ENCODE measurements at regions of chr19 and their contacts with region 1.

Region 1: GRCh38 chr19:52139252-52140031 is at the start of gene ZNF616:
- DNase-seq: peak; percentile 99
- H3K4me3 Mint-ChIP-seq: peak within 1 kb of the TSS; percentile 98
- H3K27ac Mint-ChIP-seq: peak within 1 kb of the TSS; percentile 90
- H3K4me1 Mint-ChIP-seq: peaks cover 17% of the 10 kb centered on the region
- H3K27me3 Mint-ChIP-seq: no peaks in the 10 kb centered on the region
- total RNA-seq, gene ZNF616: 6.1 and 7.1 TPM in 2 replicates

Region 2: DNA sequence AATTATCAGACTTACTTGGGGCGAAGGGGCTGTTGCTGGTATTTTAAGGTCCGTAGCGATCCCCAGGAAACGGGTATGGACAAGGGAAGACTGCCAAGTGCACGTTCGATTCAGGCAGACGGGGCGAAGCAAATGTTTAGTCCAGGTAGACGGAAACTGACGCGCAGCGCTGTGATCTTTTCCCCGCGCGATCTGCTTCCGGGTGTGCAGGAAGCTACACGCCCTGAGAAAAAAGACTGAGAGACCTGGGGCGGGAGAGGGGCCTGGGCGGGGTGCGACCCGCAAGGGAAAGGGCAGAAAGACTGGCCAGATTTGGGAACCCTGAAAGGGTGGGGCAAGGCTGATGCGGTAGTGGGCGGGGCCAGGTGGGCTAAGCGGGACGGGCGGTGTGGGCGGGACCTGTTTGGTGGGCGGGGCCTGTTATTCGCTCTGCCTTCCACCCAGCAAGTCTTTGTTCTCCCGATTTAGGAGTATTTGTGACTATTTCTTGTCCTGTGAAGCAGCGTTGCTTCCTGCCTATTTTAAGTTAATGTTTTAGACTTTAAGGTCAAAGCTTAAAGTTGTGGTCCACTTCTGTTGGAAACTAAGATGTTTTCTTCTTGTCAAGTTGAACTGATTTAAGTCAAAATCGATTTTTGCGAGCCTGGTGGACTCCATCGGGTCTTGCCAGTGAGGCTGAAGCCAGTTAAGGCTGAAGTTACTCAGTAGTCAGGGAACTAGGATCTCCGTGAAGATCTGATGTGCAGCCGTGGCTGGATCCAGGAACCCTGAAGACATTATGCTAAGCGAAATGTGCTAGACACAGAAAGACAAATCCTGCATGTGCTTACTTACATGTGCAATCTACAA is 32.1 kb after region 1 on chr19 and contains the start of gene ZNF836:
- intact Hi-C with region 1: loop called (anchors 1 kb)
- DNase-seq: peak; percentile 96
- H3K4me3 Mint-ChIP-seq: peak within 1 kb of the TSS; percentile 93
- H3K27ac Mint-ChIP-seq: peak within 1 kb of the TSS; percentile 94
- H3K4me1 Mint-ChIP-seq: peaks cover 19% of the 10 kb centered on the region
- H3K27me3 Mint-ChIP-seq: no peaks in the 10 kb centered on the region
- total RNA-seq, gene ZNF836: 6.3 and 6.7 TPM in 2 replicates

Region 3: GRCh38 chr19:52200044-52200443 is 60.6 kb after region 1 on chr19:
- intact Hi-C with region 1: no loop called
- DNase-seq: no peak
- H3K4me3 Mint-ChIP-seq: no peak overlapping the region
- H3K27ac Mint-ChIP-seq: no peak overlapping the region
- H3K4me1 Mint-ChIP-seq: peaks cover 11% of the 10 kb centered on the region
- H3K27me3 Mint-ChIP-seq: no peaks in the 10 kb centered on the region

Region 4: GRCh38 chr19:52237771-52238400 is 98.4 kb after region 1 on chr19:
- intact Hi-C with region 1: loop called (anchors 1 kb)
- DNase-seq: peak; percentile 87
- H3K4me3 Mint-ChIP-seq: no peak overlapping the region
- H3K27ac Mint-ChIP-seq: no peak overlapping the region
- H3K4me1 Mint-ChIP-seq: no peaks in the 10 kb centered on the region
- H3K27me3 Mint-ChIP-seq: no peaks in the 10 kb centered on the region

Region 5: GRCh38 chr19:52269338-52270261 is 130.2 kb after region 1 on chr19 and contains the start of gene ZNF766:
- intact Hi-C with region 1: loop called (anchors 1 kb)
- DNase-seq: peak; percentile 99
- H3K4me3 Mint-ChIP-seq: peak within 1 kb of the TSS; percentile 99
- H3K27ac Mint-ChIP-seq: peak within 1 kb of the TSS; percentile 96
- H3K4me1 Mint-ChIP-seq: peaks cover 11% of the 10 kb centered on the region
- H3K27me3 Mint-ChIP-seq: no peaks in the 10 kb centered on the region
- total RNA-seq, gene ZNF766: 18.2 and 19.9 TPM in 2 replicates

Measured in activated CD4-positive, alpha-beta T cell treated with anti-CD3 and anti-CD28 coated beads, Interleukin-2, amount 10 ng/mL, durations not matched to agents 24 days and 14 days (primary cell).